Cardiac septum (tissue), 1 donor: ENCODE measurements at regions of chr21 and their contacts with region 1.

Region 1: GRCh38 chr21:33924079-33924765 is 8.6 kb upstream of the ATP5PO start:
- DNase-seq: peak; percentile 93

Region 2: GRCh38 chr21:33866826-33867225 is 57.4 kb before region 1 on chr21:
- intact Hi-C with region 1: no loop called
- DNase-seq: no peak

Region 3: GRCh38 chr21:34313116-34313515 is 388.9 kb after region 1 on chr21:
- intact Hi-C with region 1: no loop called
- DNase-seq: no peak

Region 4: DNA sequence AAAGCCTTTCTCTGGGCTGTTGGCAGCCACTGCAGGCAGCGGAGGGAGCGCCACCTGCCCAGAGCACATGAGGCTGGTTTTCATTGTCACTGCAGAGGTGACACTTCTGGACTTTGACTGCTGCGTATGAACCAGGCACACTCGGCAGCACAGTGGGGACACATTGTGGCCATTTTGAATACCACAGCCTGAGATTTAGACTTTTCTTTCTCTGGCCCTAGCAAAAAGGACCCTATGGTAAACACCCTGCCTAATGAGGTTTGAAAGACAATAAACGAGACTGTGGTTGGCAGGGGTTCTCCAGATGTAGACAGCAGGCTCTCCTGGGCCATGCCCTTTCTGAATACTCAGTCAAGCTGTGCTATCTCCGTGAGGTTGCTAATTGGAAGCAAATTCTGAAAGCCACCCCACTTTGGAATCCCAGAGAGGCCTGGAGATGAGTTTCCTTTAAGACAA is 427.6 kb after region 1 on chr21:
- intact Hi-C with region 1: loop called (anchors 1 kb)
- DNase-seq: no peak